HCT116 (cell line): ENCODE measurements at regions of chr5 and their contacts with region 1.

Region 1: DNA sequence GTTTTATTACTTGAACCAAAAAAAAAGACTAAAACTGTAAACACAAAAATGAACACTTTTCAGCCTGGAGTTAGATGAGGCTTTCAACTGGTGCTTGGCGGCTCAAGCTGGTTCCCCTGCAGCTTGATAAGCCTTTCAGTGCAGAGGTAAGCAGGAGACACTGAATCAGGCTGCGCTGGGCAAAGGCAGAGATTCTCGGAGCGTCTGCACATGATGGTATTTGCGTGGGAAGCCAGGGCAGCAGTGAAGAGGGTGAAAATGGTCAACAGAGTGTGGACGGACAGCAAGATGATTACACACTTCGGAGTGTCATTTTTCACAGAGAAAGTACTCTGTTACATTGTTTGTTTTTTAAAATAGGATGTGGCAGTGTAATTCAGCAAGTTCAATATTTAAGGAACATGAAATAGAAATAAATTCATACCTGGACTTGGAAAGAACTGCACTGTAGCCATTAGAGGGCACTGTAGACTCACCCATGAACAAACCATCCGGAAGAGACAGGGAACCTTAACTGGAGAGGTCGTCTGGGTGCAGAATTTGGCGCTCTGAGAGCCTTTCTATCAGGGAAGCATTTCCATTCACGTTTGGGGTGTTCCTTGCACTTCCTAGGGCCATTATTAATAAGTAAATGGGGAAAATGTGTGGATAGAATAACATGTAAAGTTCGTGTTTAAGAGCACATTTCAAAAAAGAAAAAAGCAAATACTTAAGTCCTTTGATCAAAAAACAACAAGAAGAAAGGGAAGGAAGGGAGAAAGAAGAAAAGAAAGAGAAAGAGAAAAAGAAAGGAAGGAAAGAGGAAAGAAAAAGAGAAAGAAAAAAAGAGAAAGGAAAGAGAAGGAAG is 69.8 kb downstream of the ICE1 start:
- DNase-seq: peak; percentile 57
- ATAC-seq: peak; percentile 44; the same call in 1 of the 2 replicates
- H3K4me3 ChIP-seq: no peak overlapping the region
- H3K27ac ChIP-seq: no peak overlapping the region
- H3K4me1 ChIP-seq: peaks cover 6 to 7% of the 10 kb centered on the region in 2 experiments
- H3K27me3 ChIP-seq: no peaks in the 10 kb centered on the region
- CTCF ChIP-seq: peak; percentile 40 to 83 (median 69); a peak in 5 of 6 replicates
- POLR2A ChIP-seq: no peak
- RAD21 ChIP-seq: peak; percentile 83

Region 2: GRCh38 chr5:5432020-5432707 is 60.1 kb before region 1 on chr5:
- CTCF ChIA-PET with region 1: no interaction called
- POLR2A ChIA-PET with region 1: no interaction called
- RAD21 ChIA-PET with region 1: no interaction called
- intact Hi-C with region 1: no loop called
- DNase-seq: no peak
- ATAC-seq: no peak
- H3K4me3 ChIP-seq: no peak overlapping the region
- H3K27ac ChIP-seq: no peak overlapping the region
- H3K4me1 ChIP-seq: no peaks in the 10 kb centered on the region
- H3K27me3 ChIP-seq: no peaks in the 10 kb centered on the region
- CTCF ChIP-seq: no peak
- POLR2A ChIP-seq: no peak
- RAD21 ChIP-seq: no peak

Region 3: DNA sequence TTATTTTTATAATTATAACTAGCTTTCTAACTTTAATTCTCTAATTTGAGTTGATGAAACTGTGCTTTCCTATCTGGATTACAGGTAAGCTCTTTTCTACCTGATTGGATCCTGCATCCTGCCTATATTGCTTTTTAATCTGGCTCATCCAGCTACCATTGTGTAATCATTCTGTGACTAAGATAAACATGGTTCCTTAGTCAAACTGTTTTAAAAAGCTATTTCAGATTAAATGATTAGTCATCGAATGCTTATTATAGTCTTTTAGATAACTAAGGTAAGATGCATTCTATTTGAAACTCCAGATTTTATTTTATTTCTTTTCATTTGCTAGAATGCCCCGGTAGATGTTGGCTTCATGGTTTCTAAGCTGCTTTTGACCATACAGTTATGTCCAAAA is 19.1 kb before region 1 on chr5:
- CTCF ChIA-PET with region 1: no interaction called
- POLR2A ChIA-PET with region 1: no interaction called
- RAD21 ChIA-PET with region 1: no interaction called
- intact Hi-C with region 1: no loop called
- DNase-seq: no peak
- ATAC-seq: no peak
- H3K4me3 ChIP-seq: no peak overlapping the region
- H3K27ac ChIP-seq: no peak overlapping the region
- H3K4me1 ChIP-seq: no peaks in the 10 kb centered on the region
- H3K27me3 ChIP-seq: no peaks in the 10 kb centered on the region
- CTCF ChIP-seq: no peak
- POLR2A ChIP-seq: no peak
- RAD21 ChIP-seq: no peak

Region 4: DNA sequence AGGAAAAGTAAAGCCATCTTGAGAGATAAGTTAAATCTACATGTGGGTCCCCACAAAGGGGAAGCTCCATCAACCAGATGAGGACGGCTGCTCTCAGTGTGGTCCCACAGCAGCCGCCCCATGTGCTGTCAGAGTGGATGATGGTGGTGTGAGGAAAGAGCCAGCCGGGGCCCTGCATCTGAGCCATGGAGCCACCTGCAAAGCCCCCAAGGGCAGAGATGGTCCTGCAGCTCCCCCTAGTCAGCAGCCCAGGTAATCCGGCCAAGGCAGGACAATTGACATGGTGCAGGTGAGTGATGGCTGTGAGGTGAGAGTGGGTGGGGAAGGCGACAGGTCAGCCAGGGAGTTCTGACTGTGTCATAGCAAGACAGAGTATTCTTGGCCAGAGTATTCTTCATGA is 389.0 kb after region 1 on chr5:
- CTCF ChIA-PET with region 1: no interaction called
- POLR2A ChIA-PET with region 1: no interaction called
- RAD21 ChIA-PET with region 1: no interaction called
- intact Hi-C with region 1: loop called (anchors 2 kb)
- DNase-seq: no peak
- ATAC-seq: no peak
- H3K4me3 ChIP-seq: no peak overlapping the region
- H3K27ac ChIP-seq: no peak overlapping the region
- H3K4me1 ChIP-seq: no peaks in the 10 kb centered on the region
- H3K27me3 ChIP-seq: no peaks in the 10 kb centered on the region
- CTCF ChIP-seq: peak in 1 of 3 experiments; percentile 8; a peak in 1 of 6 replicates
- POLR2A ChIP-seq: no peak
- RAD21 ChIP-seq: peak; percentile 31

Region 5: GRCh38 chr5:6377905-6378765 is 885.8 kb after region 1 on chr5 and contains the start of gene MED10:
- CTCF ChIA-PET with region 1: no interaction called
- POLR2A ChIA-PET with region 1: no interaction called
- RAD21 ChIA-PET with region 1: no interaction called
- intact Hi-C with region 1: loop called (anchors 5 kb)
- DNase-seq: peak; percentile 82
- ATAC-seq: peak; percentile 98
- H3K4me3 ChIP-seq: peak within 1 kb of the TSS; percentile 87 to 93
- H3K27ac ChIP-seq: peak within 1 kb of the TSS; percentile 79
- H3K4me1 ChIP-seq: peaks cover 9 to 14% of the 10 kb centered on the region in 2 experiments; a peak in 3 of 4 replicates
- H3K27me3 ChIP-seq: no peaks in the 10 kb centered on the region
- CTCF ChIP-seq: no peak
- POLR2A ChIP-seq: peak; percentile 38
- RAD21 ChIP-seq: no peak
- total RNA-seq, gene MED10: 35.0 TPM

Region 6: GRCh38 chr5:6525910-6526309 is 1033.6 kb after region 1 on chr5:
- CTCF ChIA-PET with region 1: no interaction called
- POLR2A ChIA-PET with region 1: no interaction called
- RAD21 ChIA-PET with region 1: no interaction called
- intact Hi-C with region 1: loop called (anchors 1 kb)
- DNase-seq: peak; percentile 13
- ATAC-seq: peak; percentile 88
- H3K4me3 ChIP-seq: no peak overlapping the region
- H3K27ac ChIP-seq: no peak overlapping the region
- H3K4me1 ChIP-seq: no peaks in the 10 kb centered on the region
- H3K27me3 ChIP-seq: peaks cover 30% of the 10 kb centered on the region
- CTCF ChIP-seq: peak; percentile 18 to 63 (median 56); a peak in 5 of 6 replicates
- POLR2A ChIP-seq: no peak
- RAD21 ChIP-seq: peak; percentile 57

Region 7: DNA sequence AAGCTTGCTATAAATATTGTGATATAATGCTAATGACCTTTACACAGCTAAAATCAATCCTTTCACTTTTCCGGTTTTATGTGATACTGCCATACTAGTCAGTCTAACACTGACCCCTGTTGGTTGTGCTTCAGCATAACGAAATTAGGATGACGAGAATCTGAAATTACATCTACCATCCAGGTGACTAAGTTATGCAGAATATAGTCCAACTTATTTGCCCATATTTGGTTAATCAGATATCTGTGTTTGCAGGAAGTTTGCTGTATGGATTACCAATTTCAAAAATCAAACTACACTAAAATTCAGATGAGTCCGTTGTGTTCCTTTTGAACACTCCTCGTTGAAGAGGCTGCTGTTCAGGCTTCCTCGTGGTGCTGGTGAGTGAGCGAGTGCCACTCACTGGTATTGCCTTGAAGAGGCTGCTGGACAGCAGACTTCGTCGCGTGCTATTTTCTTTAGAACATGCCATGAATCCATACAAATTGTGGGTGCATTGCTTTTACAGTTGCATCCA is 1253.5 kb after region 1 on chr5:
- CTCF ChIA-PET with region 1: interaction called, 4 read pairs
- POLR2A ChIA-PET with region 1: no interaction called
- RAD21 ChIA-PET with region 1: no interaction called
- intact Hi-C with region 1: loop called (anchors 1 kb)
- DNase-seq: peak; percentile 31
- ATAC-seq: peak; percentile 80
- H3K4me3 ChIP-seq: no peak overlapping the region
- H3K27ac ChIP-seq: no peak overlapping the region
- H3K4me1 ChIP-seq: no peaks in the 10 kb centered on the region
- H3K27me3 ChIP-seq: no peaks in the 10 kb centered on the region
- CTCF ChIP-seq: peak; percentile 16 to 86 (median 72); a peak in 5 of 6 replicates
- POLR2A ChIP-seq: no peak
- RAD21 ChIP-seq: peak; percentile 72